ENCODE measurements at regions of chr16 and their contacts with region 1.

Region 1: DNA sequence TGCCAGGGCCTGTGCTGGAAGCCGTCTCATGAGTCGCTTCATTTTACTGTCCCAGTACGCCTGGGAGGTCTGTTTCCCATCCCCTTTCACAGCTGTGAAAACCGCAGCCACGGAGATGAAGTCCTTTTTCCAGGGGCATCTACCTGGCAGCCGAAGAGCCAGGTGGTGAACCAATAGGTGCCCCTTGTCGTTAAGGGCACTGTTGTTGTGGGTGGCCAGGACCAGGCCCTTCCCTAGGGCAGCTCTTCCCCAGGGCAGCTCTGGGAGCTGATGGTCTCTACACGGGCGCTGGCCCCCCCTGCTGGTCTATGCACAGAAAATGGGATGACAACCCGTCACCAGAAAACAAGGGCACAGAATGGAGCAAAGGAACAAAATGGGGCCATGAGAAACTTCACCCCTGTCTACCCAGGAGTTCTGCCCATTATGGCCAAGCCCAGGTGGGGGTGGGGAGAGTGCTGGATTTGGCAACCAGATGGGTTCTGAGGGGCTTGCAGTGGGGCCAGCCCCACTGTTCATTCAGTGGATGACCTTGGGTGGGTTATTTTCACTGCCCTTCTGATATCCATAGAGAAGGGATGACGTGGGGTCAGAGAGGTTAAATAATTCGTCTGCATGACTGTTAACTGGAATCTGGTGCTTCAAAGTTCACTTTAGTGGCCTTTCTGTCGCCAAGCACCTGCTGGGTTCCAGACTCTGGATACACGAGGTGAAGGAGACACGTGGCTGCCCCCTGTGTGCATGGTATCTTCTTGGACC is 11.5 kb downstream of the RMI2 start:
- DNase-seq: peak; percentile 74 to 86 (median 83)
- ATAC-seq: peak; percentile 84
- H3K4me3 ChIP-seq: no peak overlapping the region
- H3K4me1 ChIP-seq: peaks cover 6% of the 10 kb centered on the region
- CTCF ChIP-seq: peak; percentile 23

Region 2: DNA sequence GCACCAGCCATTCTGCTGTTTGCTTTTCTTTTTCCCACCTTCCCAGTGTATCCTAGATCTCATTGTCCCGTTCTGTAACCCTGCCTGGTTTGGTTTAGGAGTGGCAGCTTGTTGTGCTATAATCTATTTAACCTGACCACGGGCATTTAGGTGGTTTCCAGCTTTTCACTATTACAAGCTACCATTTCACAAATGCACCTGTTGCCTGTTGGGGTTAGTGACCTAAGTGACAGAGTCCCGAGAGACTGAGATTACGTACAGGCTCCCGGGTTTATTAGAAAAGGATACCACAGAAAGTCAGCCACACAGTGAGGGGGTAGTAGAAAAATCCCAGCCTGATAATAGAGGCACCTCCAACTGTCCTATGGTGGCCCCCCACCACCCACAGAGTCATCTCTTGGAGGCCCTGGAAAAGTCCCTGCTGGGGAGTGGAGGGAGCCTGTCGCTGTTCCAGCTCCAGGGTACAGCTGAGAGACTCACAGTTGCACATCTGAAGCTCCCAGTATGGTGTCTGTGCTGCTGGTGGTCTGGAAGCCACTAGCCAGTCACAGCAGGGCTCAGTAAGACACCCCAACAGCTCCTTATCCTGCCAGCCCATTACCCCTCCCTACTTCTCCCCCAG is 391.2 kb before region 1 on chr16:
- intact Hi-C with region 1: loop called (anchors 2 to 5 kb)
- DNase-seq: no peak
- ATAC-seq: no peak
- H3K4me3 ChIP-seq: no peak overlapping the region
- H3K4me1 ChIP-seq: no peaks in the 10 kb centered on the region
- CTCF ChIP-seq: no peak

Region 3: GRCh38 chr16:10971560-10971961 is 385.2 kb before region 1 on chr16:
- intact Hi-C with region 1: loop called (anchors 2 to 5 kb)
- DNase-seq: peak in 1 of 3 donors; percentile 81
- ATAC-seq: peak; percentile 83
- H3K4me3 ChIP-seq: no peak overlapping the region
- H3K4me1 ChIP-seq: no peaks in the 10 kb centered on the region
- CTCF ChIP-seq: peak; percentile 39

Region 4: GRCh38 chr16:11263737-11264136 is 93.0 kb before region 1 on chr16:
- intact Hi-C with region 1: loop called in 1 of 2 experiments (anchors 10 kb)
- DNase-seq: peak in 1 of 3 donors; percentile 20
- ATAC-seq: peak; percentile 13
- H3K4me3 ChIP-seq: no peak overlapping the region
- H3K4me1 ChIP-seq: peaks cover 25% of the 10 kb centered on the region
- CTCF ChIP-seq: no peak

Measured in mucosa of descending colon (tissue), 3 donors.